ENCODE measurements at regions of chr7 and their contacts with region 1.

Region 1: GRCh38 chr7:139109188-139109982 is at the start of gene ZC3HAV1:
- DNase-seq: peak; percentile 93
- ATAC-seq: peak; percentile 79
- H3K4me3 Mint-ChIP-seq: peak within 1 kb of the TSS; percentile 85
- H3K27ac Mint-ChIP-seq: peak within 1 kb of the TSS; percentile 96
- H3K4me1 Mint-ChIP-seq: peaks cover 32% of the 10 kb centered on the region
- H3K27me3 Mint-ChIP-seq: no peaks in the 10 kb centered on the region
- CTCF ChIP-seq: no peak
- total RNA-seq, gene ZC3HAV1: 125 to 128 TPM

Region 2: GRCh38 chr7:139095194-139095659 is 14.2 kb before region 1 on chr7:
- CTCF ChIA-PET with region 1: interaction called, 21 read pairs
- POLR2A ChIA-PET with region 1: interaction called, 71 read pairs
- intact Hi-C with region 1: no loop called
- DNase-seq: peak; percentile 85
- ATAC-seq: peak; percentile 82
- H3K4me3 Mint-ChIP-seq: peak overlapping the region; percentile 76
- H3K27ac Mint-ChIP-seq: peak overlapping the region; percentile 95
- H3K4me1 Mint-ChIP-seq: peaks cover 83% of the 10 kb centered on the region
- H3K27me3 Mint-ChIP-seq: no peaks in the 10 kb centered on the region
- CTCF ChIP-seq: no peak

Region 3: DNA sequence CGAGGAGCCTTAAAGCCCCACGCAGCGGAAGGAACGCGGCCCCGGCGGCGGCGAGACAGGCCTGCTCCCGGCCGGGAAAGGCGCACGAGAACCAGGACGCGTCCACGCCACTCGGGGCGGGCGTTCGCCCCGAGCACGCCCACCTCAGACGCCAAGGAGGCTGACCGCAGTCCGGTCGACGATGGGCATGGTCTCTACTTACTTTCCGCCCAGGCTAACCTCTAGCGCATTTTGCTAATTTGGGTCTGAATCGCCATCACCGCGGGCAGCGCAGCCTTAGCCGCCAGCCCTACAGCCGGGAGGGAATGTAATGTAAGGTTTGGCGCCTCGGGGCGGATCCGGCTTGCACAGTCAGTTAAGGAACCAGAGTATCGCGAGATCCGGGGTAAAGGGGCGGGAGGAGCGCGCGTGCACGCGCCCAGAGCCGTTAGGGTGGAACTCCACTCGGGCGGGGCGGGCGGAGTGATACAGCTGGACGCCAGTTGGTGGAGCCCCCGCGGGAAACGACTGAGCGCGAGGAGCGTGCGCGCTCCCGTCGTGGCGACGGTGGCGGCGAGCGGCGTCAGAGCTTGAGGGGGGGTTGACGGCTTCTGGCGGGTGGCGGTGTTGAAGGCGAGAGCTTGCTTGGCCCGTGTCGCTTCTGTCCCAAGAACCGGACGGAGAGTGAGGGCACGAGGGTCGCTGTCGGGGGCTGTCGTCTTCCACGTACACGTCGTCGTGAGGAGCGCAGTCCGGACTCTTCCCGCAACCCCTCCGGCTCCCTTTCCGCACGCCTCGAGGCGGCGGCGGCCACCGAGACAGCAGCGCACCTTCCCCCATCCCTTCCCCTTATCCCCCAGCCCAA is 250.2 kb after region 1 on chr7 and contains the start of gene LUC7L2:
- CTCF ChIA-PET with region 1: no interaction called
- POLR2A ChIA-PET with region 1: interaction called, 3 read pairs
- intact Hi-C with region 1: loop called (anchors 5 kb)
- DNase-seq: peak; percentile 100
- ATAC-seq: peak; percentile 76
- H3K4me3 Mint-ChIP-seq: peak within 1 kb of the TSS; percentile 92
- H3K27ac Mint-ChIP-seq: peak within 1 kb of the TSS; percentile 98
- H3K4me1 Mint-ChIP-seq: peaks cover 28% of the 10 kb centered on the region
- H3K27me3 Mint-ChIP-seq: no peaks in the 10 kb centered on the region
- CTCF ChIP-seq: no peak
- total RNA-seq, gene LUC7L2: 133 to 140 TPM